AG04449 (cell line): ENCODE measurements at regions of chr3 and their contacts with region 1.

Region 1: DNA sequence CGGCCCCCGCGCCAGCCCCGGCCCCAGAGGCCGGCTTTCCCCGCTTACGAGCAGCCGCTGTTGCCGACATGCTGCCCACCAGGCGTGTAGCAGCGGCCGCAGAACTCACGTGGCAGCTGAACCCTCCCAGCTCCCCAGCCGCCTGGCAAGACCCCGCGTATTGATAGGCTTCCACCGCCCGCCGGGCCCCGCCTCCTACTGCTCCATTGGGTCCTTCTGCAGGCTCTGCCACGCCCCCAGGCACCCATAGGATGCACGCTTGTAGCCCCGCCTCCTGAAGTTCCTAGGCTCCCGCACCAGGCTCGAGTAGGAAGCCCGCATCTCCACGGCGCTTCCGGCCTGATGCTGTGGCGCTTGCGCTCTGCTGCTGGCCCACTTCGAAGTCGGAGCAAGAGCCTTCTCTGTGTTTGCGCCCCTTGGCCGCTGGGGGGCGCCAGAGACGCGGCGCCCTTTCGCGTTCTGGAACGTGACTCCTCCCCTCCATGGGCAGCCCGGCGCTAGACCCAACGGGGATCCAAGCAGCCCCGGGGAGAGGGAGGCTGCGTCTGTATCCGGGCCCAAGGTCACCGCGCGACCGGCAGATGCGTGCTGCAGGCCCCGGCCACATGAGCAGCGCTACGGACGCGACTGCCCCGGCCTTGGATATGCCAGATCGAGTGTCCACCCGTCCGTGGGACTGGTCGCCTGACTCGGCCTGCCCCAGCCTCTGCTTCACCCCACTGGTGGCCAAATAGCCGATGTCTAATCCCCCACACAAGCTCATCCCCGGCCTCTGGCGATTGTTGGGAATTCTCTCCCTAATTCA is at the starts of genes PARP3 and RRP9:
- DNase-seq: peak; percentile 99
- H3K4me3 ChIP-seq: peak within 1 kb of the TSS; percentile 81
- CTCF ChIP-seq: peak; percentile 99

Region 2: GRCh38 chr3:51879937-51880336 is 62.1 kb before region 1 on chr3:
- CTCF ChIA-PET with region 1: no interaction called
- POLR2A ChIA-PET with region 1: no interaction called
- DNase-seq: no peak
- H3K4me3 ChIP-seq: no peak overlapping the region
- CTCF ChIP-seq: no peak

Region 3: DNA sequence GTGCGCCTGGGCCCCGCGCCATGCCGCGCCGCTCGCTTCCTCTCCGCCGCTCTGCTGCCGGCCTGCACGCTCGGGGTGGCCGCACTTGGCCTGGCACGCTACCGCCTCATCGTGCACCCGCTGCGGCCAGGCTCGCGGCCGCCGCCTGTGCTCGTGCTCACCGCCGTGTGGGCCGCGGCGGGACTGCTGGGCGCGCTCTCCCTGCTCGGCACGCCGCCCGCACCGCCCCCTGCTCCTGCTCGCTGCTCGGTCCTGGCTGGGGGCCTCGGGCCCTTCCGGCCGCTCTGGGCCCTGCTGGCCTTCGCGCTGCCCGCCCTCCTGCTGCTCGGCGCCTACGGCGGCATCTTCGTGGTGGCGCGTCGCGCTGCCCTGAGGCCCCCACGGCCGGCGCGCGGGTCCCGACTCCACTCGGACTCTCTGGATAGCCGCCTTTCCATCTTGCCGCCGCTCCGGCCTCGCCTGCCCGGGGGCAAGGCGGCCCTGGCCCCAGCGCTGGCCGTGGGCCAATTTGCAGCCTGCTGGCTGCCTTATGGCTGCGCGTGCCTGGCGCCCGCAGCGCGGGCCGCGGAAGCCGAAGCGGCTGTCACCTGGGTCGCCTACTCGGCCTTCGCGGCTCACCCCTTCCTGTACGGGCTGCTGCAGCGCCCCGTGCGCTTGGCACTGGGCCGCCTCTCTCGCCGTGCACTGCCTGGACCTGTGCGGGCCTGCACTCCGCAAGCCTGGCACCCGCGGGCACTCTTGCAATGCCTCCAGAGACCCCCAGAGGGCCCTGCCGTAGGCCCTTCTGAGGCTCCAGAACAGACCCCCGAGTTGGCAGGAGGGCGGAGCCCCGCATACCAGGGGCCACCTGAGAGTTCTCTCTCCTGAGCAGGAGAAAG is 14.1 kb after region 1 on chr3:
- CTCF ChIA-PET with region 1: interaction called, 52 read pairs
- POLR2A ChIA-PET with region 1: interaction called, 4 read pairs
- DNase-seq: no peak
- H3K4me3 ChIP-seq: no peak overlapping the region
- CTCF ChIP-seq: peak; percentile 47

Region 4: GRCh38 chr3:51967384-51968169 is 25.6 kb after region 1 on chr3 and contains the start of gene PCBP4:
- CTCF ChIA-PET with region 1: interaction called, 74 read pairs
- POLR2A ChIA-PET with region 1: interaction called, 10 read pairs
- DNase-seq: no peak
- H3K4me3 ChIP-seq: peak within 1 kb of the TSS; percentile 80
- CTCF ChIP-seq: no peak

Region 5: DNA sequence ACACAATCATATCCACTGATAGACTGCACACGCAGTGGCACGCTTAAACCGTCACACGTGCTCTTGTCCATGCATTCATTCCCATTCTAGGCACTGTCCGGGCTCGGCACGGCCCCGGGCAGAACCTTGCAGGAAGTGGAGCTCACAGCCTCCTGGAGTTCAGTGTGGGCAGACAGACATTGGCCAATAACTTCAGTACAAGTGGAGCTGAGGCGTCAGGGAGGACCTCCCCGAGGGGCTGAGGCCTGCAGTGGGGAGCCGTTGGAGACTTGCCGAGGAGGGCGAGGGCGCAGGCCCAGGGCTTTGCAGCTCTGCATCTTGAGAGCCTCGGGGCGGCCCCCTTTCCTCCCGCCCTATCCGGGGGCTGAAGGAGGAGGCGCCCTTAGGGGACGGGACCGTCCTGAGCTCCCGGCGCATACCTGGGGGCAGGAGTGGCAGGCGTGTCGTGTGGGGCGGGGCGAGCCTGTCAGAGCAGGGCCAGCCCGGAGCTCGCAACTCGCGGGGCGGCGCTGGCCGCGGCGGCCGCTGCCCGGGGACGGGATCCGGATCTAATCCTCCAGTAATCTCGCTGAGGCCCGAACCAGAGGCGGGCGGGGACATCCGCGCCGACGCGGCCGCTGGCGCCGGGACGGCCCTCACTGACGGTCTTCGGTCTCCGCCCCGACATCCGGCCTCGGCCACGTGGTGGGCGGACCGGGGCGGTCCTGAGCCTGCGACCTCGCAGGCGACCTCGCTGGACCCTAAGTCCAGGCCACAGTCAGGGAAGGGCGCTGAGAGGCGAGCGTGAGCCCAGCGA is 41.0 kb after region 1 on chr3 and contains the start of gene ACY1:
- CTCF ChIA-PET with region 1: interaction called, 45 read pairs
- POLR2A ChIA-PET with region 1: interaction called, 4 read pairs
- DNase-seq: no peak
- H3K4me3 ChIP-seq: peak within 1 kb of the TSS; percentile 71
- CTCF ChIP-seq: no peak

Region 6: GRCh38 chr3:52056968-52057805 is 115.2 kb after region 1 on chr3:
- CTCF ChIA-PET with region 1: interaction called, 14 read pairs
- POLR2A ChIA-PET with region 1: interaction called, 3 read pairs
- DNase-seq: peak; percentile 86
- H3K4me3 ChIP-seq: peak overlapping the region; percentile 72
- CTCF ChIP-seq: no peak

Region 7: GRCh38 chr3:52197842-52198668 is 256.1 kb after region 1 on chr3 and contains the start of gene ALAS1:
- CTCF ChIA-PET with region 1: no interaction called
- POLR2A ChIA-PET with region 1: no interaction called
- DNase-seq: peak; percentile 16
- H3K4me3 ChIP-seq: peak within 1 kb of the TSS; percentile 84
- CTCF ChIP-seq: peak; percentile 16